Activated CD4-positive, alpha-beta T cell treated with anti-CD3 and anti-CD28 coated beads for 36 hours (primary cell): ENCODE measurements at regions of chr5 and their contacts with region 1.

Region 1: DNA sequence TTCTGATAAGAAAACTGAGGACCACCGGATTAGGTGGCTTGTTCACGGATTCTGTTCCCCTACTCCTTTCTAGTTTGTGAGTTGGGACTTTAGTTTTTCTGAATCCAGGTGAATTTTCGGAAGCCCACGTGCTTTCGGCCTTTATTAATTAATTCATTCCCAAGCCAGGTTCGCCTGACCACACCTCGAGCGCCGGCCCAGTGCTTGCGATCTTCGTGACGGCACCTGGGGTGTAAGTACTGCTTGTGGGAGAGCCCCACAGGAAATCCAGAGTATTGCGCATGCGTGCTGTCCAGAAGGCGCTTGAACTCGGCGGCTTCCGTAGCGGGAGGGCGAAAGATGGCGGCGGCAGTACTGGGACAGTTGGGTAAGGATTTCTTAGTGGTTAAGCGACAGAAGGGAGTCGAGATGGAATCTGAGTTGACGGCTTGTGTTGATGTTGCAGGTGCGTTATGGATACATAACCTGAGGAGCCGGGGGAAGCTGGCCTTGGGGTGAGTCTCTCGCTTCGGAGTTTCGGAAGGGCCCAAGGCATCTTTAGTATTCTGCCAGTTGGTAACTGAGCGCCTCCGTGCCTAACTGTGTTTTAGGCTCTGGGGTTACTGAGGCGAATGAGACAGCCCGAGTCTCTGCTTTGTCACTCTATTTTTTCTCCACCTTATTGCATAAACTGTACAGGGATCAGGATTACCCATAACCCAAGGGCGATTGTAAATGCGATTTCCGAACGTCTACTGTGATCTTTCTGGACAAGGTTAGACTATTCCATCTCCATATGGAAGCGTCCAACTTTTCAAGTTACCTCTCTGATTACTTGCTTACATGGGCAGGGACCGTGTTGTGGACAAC is at the start of gene MRPL22:
- DNase-seq: peak; percentile 97
- ATAC-seq: peak; percentile 72
- H3K4me3 Mint-ChIP-seq: peak within 1 kb of the TSS; percentile 97
- H3K27ac Mint-ChIP-seq: peak within 1 kb of the TSS; percentile 96
- H3K4me1 Mint-ChIP-seq: peaks cover 40% of the 10 kb centered on the region
- H3K27me3 Mint-ChIP-seq: no peaks in the 10 kb centered on the region
- total RNA-seq, gene MRPL22: 77.2 to 86.7 TPM

Region 2: GRCh38 chr5:154038707-154039457 is 902.1 kb before region 1 on chr5 and contains the starts of genes FAM114A2 and MFAP3:
- CTCF ChIA-PET with region 1: no interaction called
- POLR2A ChIA-PET with region 1: no interaction called
- intact Hi-C with region 1: loop called (anchors 2 to 5 kb)
- DNase-seq: peak; percentile 94
- ATAC-seq: peak; percentile 99
- H3K4me3 Mint-ChIP-seq: peak within 1 kb of the TSS; percentile 100
- H3K27ac Mint-ChIP-seq: peak within 1 kb of the TSS; percentile 92
- H3K4me1 Mint-ChIP-seq: peaks cover 55% of the 10 kb centered on the region
- H3K27me3 Mint-ChIP-seq: no peaks in the 10 kb centered on the region
- total RNA-seq, gene FAM114A2: 27.9 to 28.5 TPM
- total RNA-seq, gene MFAP3: 13.2 to 13.5 TPM

Region 3: GRCh38 chr5:154829589-154830218 is 111.3 kb before region 1 on chr5:
- CTCF ChIA-PET with region 1: no interaction called
- POLR2A ChIA-PET with region 1: no interaction called
- intact Hi-C with region 1: no loop called
- DNase-seq: peak; percentile 59
- ATAC-seq: peak; percentile 91
- H3K4me3 Mint-ChIP-seq: no peak overlapping the region
- H3K27ac Mint-ChIP-seq: peak overlapping the region; percentile 75
- H3K4me1 Mint-ChIP-seq: peaks cover 39% of the 10 kb centered on the region
- H3K27me3 Mint-ChIP-seq: no peaks in the 10 kb centered on the region

Region 4: GRCh38 chr5:155004138-155004744 is 63.2 kb after region 1 on chr5:
- CTCF ChIA-PET with region 1: interaction called, 12 read pairs
- POLR2A ChIA-PET with region 1: no interaction called
- intact Hi-C with region 1: loop called in 1 of 2 experiments (anchors 1 kb)
- DNase-seq: peak; percentile 60
- ATAC-seq: peak; percentile 51
- H3K4me3 Mint-ChIP-seq: no peak overlapping the region
- H3K27ac Mint-ChIP-seq: no peak overlapping the region
- H3K4me1 Mint-ChIP-seq: no peaks in the 10 kb centered on the region
- H3K27me3 Mint-ChIP-seq: peaks cover 19% of the 10 kb centered on the region